ENCODE measurements at regions of chr19 and their contacts with region 1.

Region 1: GRCh38 chr19:48271531-48272151 is 1.8 kb downstream of the ZNF114 start:
- DNase-seq: peak; percentile 62 to 80
- ATAC-seq: peak; percentile 76
- H3K4me3 ChIP-seq: peak overlapping the region in 1 of 2 donors; percentile 15
- H3K27ac ChIP-seq: no peak overlapping the region
- H3K4me1 ChIP-seq: no peaks in the 10 kb centered on the region
- H3K27me3 ChIP-seq: no peaks in the 10 kb centered on the region

Region 2: DNA sequence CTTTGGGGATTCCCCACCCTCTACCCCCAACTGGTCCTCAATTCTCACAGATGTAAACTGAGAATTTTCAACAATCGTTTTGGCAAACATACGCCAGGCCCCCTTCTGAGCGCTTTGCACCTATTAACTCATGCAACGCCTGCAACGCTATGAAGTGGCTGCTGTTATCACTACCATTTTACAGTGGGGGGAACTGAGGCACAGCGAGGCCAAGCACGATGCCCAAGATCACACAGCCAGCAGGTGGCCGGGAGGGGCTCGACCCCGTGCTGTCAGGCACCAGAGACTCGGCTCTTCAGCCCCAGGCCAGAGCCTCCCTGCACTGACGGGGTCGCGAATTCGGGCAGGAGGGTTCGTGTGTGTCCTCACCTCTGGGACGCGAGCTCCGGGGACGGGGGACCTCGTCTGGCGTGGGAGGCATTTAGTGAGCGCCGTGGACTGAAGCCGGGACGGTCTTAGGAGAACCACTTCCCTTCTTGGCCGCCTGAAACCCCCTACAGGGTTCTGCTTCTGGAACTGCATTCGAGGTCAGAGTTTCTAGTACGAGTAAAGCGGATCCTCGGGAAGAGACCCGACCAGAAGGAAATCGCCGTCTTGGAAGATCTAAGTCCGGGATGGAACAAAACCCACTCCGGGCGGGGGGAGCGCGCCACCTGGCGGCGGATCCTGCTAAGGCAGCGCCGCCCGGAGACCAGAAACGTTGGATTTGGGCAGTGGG is 19.3 kb after region 1 on chr19:
- intact Hi-C with region 1: loop called (anchors 1 to 2 kb)
- DNase-seq: peak; percentile 88 to 96
- ATAC-seq: peak; percentile 95
- H3K4me3 ChIP-seq: peak overlapping the region in 1 of 2 donors; percentile 26
- H3K27ac ChIP-seq: no peak overlapping the region
- H3K4me1 ChIP-seq: no peaks in the 10 kb centered on the region
- H3K27me3 ChIP-seq: no peaks in the 10 kb centered on the region

Region 3: GRCh38 chr19:48415395-48415794 is 143.8 kb after region 1 on chr19:
- intact Hi-C with region 1: no loop called
- DNase-seq: peak; percentile 91 to 93
- ATAC-seq: peak; percentile 83
- H3K4me3 ChIP-seq: no peak overlapping the region
- H3K27ac ChIP-seq: no peak overlapping the region
- H3K4me1 ChIP-seq: no peaks in the 10 kb centered on the region
- H3K27me3 ChIP-seq: no peaks in the 10 kb centered on the region

Region 4: DNA sequence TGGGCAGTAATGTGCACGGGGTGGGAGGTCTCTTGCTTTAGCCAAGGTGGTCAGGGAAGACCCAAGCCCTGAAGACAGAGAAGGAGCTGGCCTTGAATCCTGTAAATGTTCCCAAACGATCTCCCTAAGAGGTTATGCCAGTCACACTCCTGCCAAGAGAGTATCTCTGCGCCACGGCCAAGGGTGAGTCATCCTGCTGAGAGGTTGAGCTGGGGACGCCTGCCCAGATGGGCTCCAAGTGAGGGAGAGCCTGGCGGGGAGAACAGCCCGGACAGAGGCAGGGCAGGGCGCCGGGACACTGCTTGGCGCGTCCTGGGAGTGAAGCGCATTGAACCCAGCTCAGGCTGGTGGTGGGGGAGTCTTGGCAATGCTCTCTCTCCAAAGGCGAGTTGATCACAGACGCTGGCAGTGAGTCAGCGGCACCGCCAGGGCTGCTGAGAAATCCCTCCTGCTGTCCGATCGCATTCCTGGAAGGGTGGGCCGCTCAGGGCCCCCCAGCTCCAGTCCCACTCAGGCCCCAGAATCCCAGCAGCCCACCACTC is 296.8 kb after region 1 on chr19:
- intact Hi-C with region 1: no loop called
- DNase-seq: peak; percentile 92 to 95
- ATAC-seq: peak; percentile 93
- H3K4me3 ChIP-seq: no peak overlapping the region
- H3K27ac ChIP-seq: no peak overlapping the region
- H3K4me1 ChIP-seq: no peaks in the 10 kb centered on the region
- H3K27me3 ChIP-seq: no peaks in the 10 kb centered on the region